Caco-2 (cell line): ENCODE measurements at regions of chr1 and their contacts with region 1.

Region 1: GRCh38 chr1:77744576-77744975 is 15.1 kb downstream of the USP33 start:
- DNase-seq: peak in 1 of 2 experiments; percentile 19
- H3K4me3 ChIP-seq: no peak overlapping the region
- H3K4me3 Mint-ChIP-seq: no peak overlapping the region
- H3K27ac Mint-ChIP-seq: no peak overlapping the region
- H3K4me1 ChIP-seq: peaks cover 3% of the 10 kb centered on the region; the same call in 1 of the 2 replicates
- H3K4me1 Mint-ChIP-seq: peaks cover 7% of the 10 kb centered on the region
- H3K27me3 ChIP-seq: no peaks in the 10 kb centered on the region
- H3K27me3 Mint-ChIP-seq: no peaks in the 10 kb centered on the region
- CTCF ChIP-seq: no peak

Region 2: DNA sequence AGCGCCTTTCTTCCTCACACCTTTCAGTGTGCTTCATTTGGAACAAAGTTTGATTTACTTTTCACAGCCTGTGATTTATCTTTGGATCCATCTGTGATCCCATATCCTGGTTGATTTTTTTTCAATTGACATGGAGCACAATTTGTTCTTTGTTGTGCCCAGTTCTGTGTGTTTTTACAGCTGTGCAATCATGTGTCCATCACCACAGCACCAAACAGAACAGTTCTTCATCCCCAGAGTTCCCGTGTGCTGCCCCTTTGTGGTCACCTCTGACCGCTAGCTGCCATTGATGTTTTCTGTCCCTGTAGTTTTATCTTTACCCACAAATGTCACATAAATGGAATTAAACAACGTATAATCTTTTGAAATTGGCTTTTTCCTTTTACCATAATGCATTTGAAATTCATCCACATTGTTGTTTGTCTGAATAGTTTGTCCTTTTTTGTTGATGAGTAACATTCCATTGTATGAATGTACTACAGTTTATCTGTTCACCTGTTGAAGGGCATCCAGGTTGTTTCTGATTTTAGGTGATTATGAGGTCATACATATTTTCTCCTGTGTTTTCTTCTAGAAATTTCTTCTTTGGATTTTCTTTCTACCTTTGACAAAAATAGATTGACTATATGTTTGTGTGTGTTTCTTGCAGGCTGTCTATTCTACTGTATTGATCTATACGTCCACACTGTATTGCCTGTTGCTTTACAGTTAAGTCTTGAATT is 52.3 kb after region 1 on chr1:
- CTCF ChIA-PET with region 1: no interaction called
- POLR2A ChIA-PET with region 1: no interaction called
- intact Hi-C with region 1: loop called (anchors 5 kb)
- DNase-seq: no peak
- H3K4me3 ChIP-seq: no peak overlapping the region
- H3K4me3 Mint-ChIP-seq: no peak overlapping the region
- H3K27ac Mint-ChIP-seq: no peak overlapping the region
- H3K4me1 ChIP-seq: no peaks in the 10 kb centered on the region
- H3K4me1 Mint-ChIP-seq: no peaks in the 10 kb centered on the region
- H3K27me3 ChIP-seq: no peaks in the 10 kb centered on the region
- H3K27me3 Mint-ChIP-seq: no peaks in the 10 kb centered on the region
- CTCF ChIP-seq: no peak

Region 3: GRCh38 chr1:77874804-77875445 is 130.3 kb after region 1 on chr1:
- CTCF ChIA-PET with region 1: no interaction called
- POLR2A ChIA-PET with region 1: no interaction called
- intact Hi-C with region 1: no loop called
- DNase-seq: no peak
- H3K4me3 ChIP-seq: no peak overlapping the region
- H3K4me3 Mint-ChIP-seq: no peak overlapping the region
- H3K27ac Mint-ChIP-seq: no peak overlapping the region
- H3K4me1 ChIP-seq: no peaks in the 10 kb centered on the region
- H3K4me1 Mint-ChIP-seq: no peaks in the 10 kb centered on the region
- H3K27me3 ChIP-seq: no peaks in the 10 kb centered on the region
- H3K27me3 Mint-ChIP-seq: no peaks in the 10 kb centered on the region
- CTCF ChIP-seq: no peak